T-cell (primary cell): ENCODE measurements at regions of chr3 and their contacts with region 1.

Region 1: GRCh38 chr3:120095226-120095978 is 1.2 kb upstream of the GSK3B start:
- DNase-seq: peak; percentile 56 to 87 (median 81)
- ATAC-seq: peak; percentile 24 to 29 (median 28)
- H3K4me3 ChIP-seq: peak overlapping the region; percentile 82 to 85
- H3K4me3 Mint-ChIP-seq: no peak overlapping the region
- H3K27ac ChIP-seq: peak overlapping the region; percentile 99
- H3K27ac Mint-ChIP-seq: peak overlapping the region in 1 of 2 donors; percentile 98
- H3K4me1 ChIP-seq: peaks cover 13 to 22% of the 10 kb centered on the region in 2 experiments
- H3K4me1 Mint-ChIP-seq: peaks cover 22 to 29% (median 25%) of the 10 kb centered on the region in 3 donors
- H3K27me3 ChIP-seq: no peaks in the 10 kb centered on the region
- H3K27me3 Mint-ChIP-seq: no peaks in the 10 kb centered on the region

Region 2: GRCh38 chr3:120129718-120130513 is 34.5 kb after region 1 on chr3:
- CTCF ChIA-PET with region 1: interaction called in 1 of 2 experiments, 10 read pairs
- POLR2A ChIA-PET with region 1: interaction called in 1 of 2 experiments, 4 read pairs
- DNase-seq: no peak
- ATAC-seq: no peak
- H3K4me3 ChIP-seq: no peak overlapping the region
- H3K4me3 Mint-ChIP-seq: no peak overlapping the region
- H3K27ac ChIP-seq: no peak overlapping the region
- H3K27ac Mint-ChIP-seq: no peak overlapping the region
- H3K4me1 ChIP-seq: no peaks in the 10 kb centered on the region
- H3K4me1 Mint-ChIP-seq: no peaks in the 10 kb centered on the region
- H3K27me3 ChIP-seq: peaks cover 0 to 3% of the 10 kb centered on the region in 2 experiments
- H3K27me3 Mint-ChIP-seq: no peaks in the 10 kb centered on the region

Region 3: GRCh38 chr3:120147072-120147871 is 51.9 kb after region 1 on chr3:
- CTCF ChIA-PET with region 1: interaction called, 3 to 14 read pairs
- POLR2A ChIA-PET with region 1: interaction called, 6 to 7 read pairs
- DNase-seq: peak; percentile 15 to 77 (median 53)
- ATAC-seq: peak; percentile 83 to 99 (median 93)
- H3K4me3 ChIP-seq: no peak overlapping the region
- H3K4me3 Mint-ChIP-seq: no peak overlapping the region
- H3K27ac ChIP-seq: no peak overlapping the region
- H3K27ac Mint-ChIP-seq: peak overlapping the region in 1 of 2 donors; percentile 52
- H3K4me1 ChIP-seq: peaks cover 7 to 19% of the 10 kb centered on the region in 2 experiments
- H3K4me1 Mint-ChIP-seq: peaks cover 12 to 23% (median 13%) of the 10 kb centered on the region in 3 donors
- H3K27me3 ChIP-seq: no peaks in the 10 kb centered on the region
- H3K27me3 Mint-ChIP-seq: no peaks in the 10 kb centered on the region

Region 4: DNA sequence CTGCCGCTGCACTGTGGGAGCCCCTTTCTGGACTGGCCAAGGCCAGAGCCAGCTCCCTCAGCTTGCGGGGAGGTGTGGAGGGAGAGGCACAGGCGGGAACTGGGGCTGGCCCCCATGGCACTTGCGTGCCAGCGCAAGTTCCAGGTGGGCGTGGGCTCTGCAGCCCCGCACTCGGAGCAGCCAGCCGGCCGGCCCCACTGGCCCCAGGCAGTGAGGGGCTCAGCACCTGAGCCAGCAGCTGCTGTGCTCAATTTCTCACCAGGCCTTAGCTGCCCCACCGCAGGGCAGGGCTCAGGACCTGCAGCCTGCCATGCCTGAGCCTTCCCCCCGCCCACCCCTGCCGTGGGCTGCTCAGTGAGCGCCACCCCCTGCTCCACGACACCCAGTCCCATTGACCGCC is 194.2 kb after region 1 on chr3:
- CTCF ChIA-PET with region 1: no interaction called
- POLR2A ChIA-PET with region 1: no interaction called
- DNase-seq: no peak
- ATAC-seq: no peak
- H3K4me3 ChIP-seq: no peak overlapping the region
- H3K4me3 Mint-ChIP-seq: no peak overlapping the region
- H3K27ac ChIP-seq: no peak overlapping the region
- H3K27ac Mint-ChIP-seq: no peak overlapping the region
- H3K4me1 ChIP-seq: peaks cover 0 to 4% of the 10 kb centered on the region in 2 experiments
- H3K4me1 Mint-ChIP-seq: peaks cover 0 to 6% (median 3%) of the 10 kb centered on the region in 3 donors
- H3K27me3 ChIP-seq: peaks cover 0 to 28% of the 10 kb centered on the region in 2 experiments
- H3K27me3 Mint-ChIP-seq: peaks cover 39 to 42% of the 10 kb centered on the region in 2 donors

Region 5: DNA sequence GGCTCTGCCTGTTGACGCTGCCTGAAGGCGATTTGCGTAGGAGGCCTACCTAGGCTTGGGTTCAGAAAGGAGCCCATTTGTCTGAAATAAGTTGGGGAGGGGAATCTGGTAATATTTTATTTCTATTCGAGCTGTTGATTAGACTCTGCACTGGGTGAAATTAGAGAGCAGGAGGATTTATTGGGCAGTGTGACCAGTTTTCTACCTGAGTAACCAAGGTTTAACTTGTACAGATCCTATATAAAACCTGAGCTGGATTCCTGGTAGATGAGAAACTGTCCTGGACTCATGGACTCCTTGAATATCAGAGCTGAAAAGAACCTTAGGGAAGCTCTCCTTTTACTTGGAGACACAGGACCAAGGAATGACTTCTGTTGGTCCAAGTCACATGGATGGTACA is 209.2 kb after region 1 on chr3:
- CTCF ChIA-PET with region 1: no interaction called
- POLR2A ChIA-PET with region 1: interaction called in 1 of 2 experiments, 25 read pairs
- DNase-seq: no peak
- ATAC-seq: no peak
- H3K4me3 ChIP-seq: no peak overlapping the region
- H3K4me3 Mint-ChIP-seq: no peak overlapping the region
- H3K27ac ChIP-seq: no peak overlapping the region
- H3K27ac Mint-ChIP-seq: no peak overlapping the region
- H3K4me1 ChIP-seq: no peaks in the 10 kb centered on the region
- H3K4me1 Mint-ChIP-seq: no peaks in the 10 kb centered on the region
- H3K27me3 ChIP-seq: peaks cover 0 to 6% of the 10 kb centered on the region in 2 experiments
- H3K27me3 Mint-ChIP-seq: peaks cover 0 to 7% of the 10 kb centered on the region in 2 donors

Region 6: GRCh38 chr3:120615847-120616599 is 520.6 kb after region 1 on chr3:
- CTCF ChIA-PET with region 1: no interaction called
- POLR2A ChIA-PET with region 1: no interaction called
- DNase-seq: no peak
- ATAC-seq: no peak
- H3K4me3 ChIP-seq: no peak overlapping the region
- H3K4me3 Mint-ChIP-seq: no peak overlapping the region
- H3K27ac ChIP-seq: no peak overlapping the region
- H3K27ac Mint-ChIP-seq: no peak overlapping the region
- H3K4me1 ChIP-seq: no peaks in the 10 kb centered on the region
- H3K4me1 Mint-ChIP-seq: no peaks in the 10 kb centered on the region
- H3K27me3 ChIP-seq: peaks cover 0 to 3% of the 10 kb centered on the region in 2 experiments
- H3K27me3 Mint-ChIP-seq: no peaks in the 10 kb centered on the region